Heart right ventricle (tissue), 16 donors: ENCODE measurements at regions of chr15 and their contacts with region 1.

Region 1: GRCh38 chr15:33581032-33581431 is 270.3 kb downstream of the RYR3 start:
- DNase-seq: no peak
- ATAC-seq: no peak
- H3K4me3 ChIP-seq: no peak overlapping the region
- H3K27ac ChIP-seq: no peak overlapping the region
- H3K4me1 ChIP-seq: no peaks in the 10 kb centered on the region
- H3K27me3 ChIP-seq: peaks cover 0 to under 1% (median 0%) of the 10 kb centered on the region in 7 donors
- CTCF ChIP-seq: no peak

Region 2: GRCh38 chr15:33382485-33382884 is 198.5 kb before region 1 on chr15:
- intact Hi-C with region 1: no loop called
- DNase-seq: no peak
- ATAC-seq: no peak
- H3K4me3 ChIP-seq: no peak overlapping the region
- H3K27ac ChIP-seq: no peak overlapping the region
- H3K4me1 ChIP-seq: no peaks in the 10 kb centered on the region
- H3K27me3 ChIP-seq: peaks cover 0 to 4% (median 0%) of the 10 kb centered on the region in 7 donors
- CTCF ChIP-seq: no peak

Region 3: DNA sequence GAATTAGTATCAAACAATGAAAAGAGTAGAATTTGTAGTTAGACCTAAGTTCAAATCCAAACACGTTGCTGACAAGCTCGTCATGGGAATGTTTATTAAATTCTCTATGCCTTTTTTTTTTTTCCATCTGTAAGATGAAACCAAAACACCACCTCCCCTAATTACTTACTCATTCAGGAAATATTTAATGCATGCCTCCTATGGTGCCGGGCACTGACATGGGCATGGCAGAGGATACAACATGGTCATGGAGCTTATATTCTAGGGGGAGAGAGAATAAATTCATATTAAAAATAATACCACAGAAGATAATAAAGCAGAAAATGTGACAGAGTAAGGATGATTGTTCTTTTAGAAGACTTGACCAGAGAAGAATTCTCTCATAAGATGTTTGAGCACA is 54.5 kb before region 1 on chr15:
- intact Hi-C with region 1: loop called in 1 of 10 experiments (anchors 10 kb)
- DNase-seq: no peak
- ATAC-seq: no peak
- H3K4me3 ChIP-seq: no peak overlapping the region
- H3K27ac ChIP-seq: no peak overlapping the region
- H3K4me1 ChIP-seq: no peaks in the 10 kb centered on the region
- H3K27me3 ChIP-seq: peaks cover 0 to 5% (median 0%) of the 10 kb centered on the region in 7 donors
- CTCF ChIP-seq: no peak

Region 4: GRCh38 chr15:33623010-33623409 is 42.0 kb after region 1 on chr15:
- intact Hi-C with region 1: no loop called
- DNase-seq: no peak
- ATAC-seq: no peak
- H3K4me3 ChIP-seq: no peak overlapping the region
- H3K27ac ChIP-seq: no peak overlapping the region
- H3K4me1 ChIP-seq: no peaks in the 10 kb centered on the region
- H3K27me3 ChIP-seq: peaks cover 0 to 5% (median 0%) of the 10 kb centered on the region in 7 donors
- CTCF ChIP-seq: no peak

Region 5: GRCh38 chr15:34483644-34484043 is 902.6 kb after region 1 on chr15:
- intact Hi-C with region 1: no loop called
- DNase-seq: no peak
- ATAC-seq: no peak
- H3K4me3 ChIP-seq: no peak overlapping the region
- H3K27ac ChIP-seq: no peak overlapping the region
- H3K4me1 ChIP-seq: no peaks in the 10 kb centered on the region
- H3K27me3 ChIP-seq: peaks cover 0 to 4% (median 0%) of the 10 kb centered on the region in 7 donors
- CTCF ChIP-seq: no peak